Activated T-helper 2 cell treated with anti-CD3 and anti-CD28 coated beads, Interferon-gamma antibody, Interleukin-2, Interleukin-4, amounts not matched to agents 10 μg/mL and 5 μg/mL and 100 μg/mL, durations not matched to agents 14 hours and 24 hours and 36 hours (primary cell): ENCODE measurements at regions of chr11 and their contacts with region 1.

Region 1: GRCh38 chr11:44911029-44911814 is 39.5 kb downstream of the TP53I11 start:
- DNase-seq: peak; percentile 70
- H3K4me3 Mint-ChIP-seq: no peak overlapping the region
- H3K27ac Mint-ChIP-seq: no peak overlapping the region
- H3K4me1 Mint-ChIP-seq: peaks cover 3% of the 10 kb centered on the region
- H3K27me3 Mint-ChIP-seq: peaks cover 4% of the 10 kb centered on the region

Region 2: DNA sequence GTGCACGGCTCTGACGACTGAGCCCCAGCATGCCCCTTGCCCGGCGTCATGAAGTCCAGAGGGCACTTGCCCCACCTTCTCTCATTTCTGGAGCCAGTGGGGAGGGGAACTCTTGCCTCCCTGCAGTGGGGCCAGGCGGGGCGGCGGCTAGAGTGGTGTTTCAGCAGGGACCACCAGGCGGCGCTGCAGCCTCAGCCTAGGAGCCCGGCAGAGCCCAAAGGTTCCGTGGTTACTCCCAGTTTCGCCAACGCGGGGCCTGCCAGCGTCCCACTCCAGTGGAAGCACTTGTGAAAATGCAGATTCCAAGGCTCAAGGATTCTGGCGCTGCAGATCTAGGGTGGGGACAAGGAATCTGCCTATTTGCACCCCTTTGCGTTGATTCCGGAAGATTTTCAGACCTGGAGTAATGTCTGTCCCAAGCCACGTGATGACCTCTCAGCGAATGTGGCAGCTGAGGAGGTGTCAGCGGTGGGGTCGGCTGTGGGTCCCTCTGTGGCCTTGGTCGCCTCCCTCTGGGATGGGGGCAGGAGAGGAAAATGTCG is 290.0 kb before region 1 on chr11:
- intact Hi-C with region 1: loop called (anchors 5 kb)
- DNase-seq: peak; percentile 32
- H3K4me3 Mint-ChIP-seq: no peak overlapping the region
- H3K27ac Mint-ChIP-seq: no peak overlapping the region
- H3K4me1 Mint-ChIP-seq: peaks cover 16% of the 10 kb centered on the region
- H3K27me3 Mint-ChIP-seq: no peaks in the 10 kb centered on the region